Activated B cell treated with CpG ODN at 0.5 μM for 24 hours (primary cell): ENCODE measurements at regions of chr12 and their contacts with region 1.

Region 1: GRCh38 chr12:31325877-31326631 is at the start of gene SINHCAF:
- DNase-seq: peak; percentile 99
- ATAC-seq: peak; percentile 62
- H3K4me3 Mint-ChIP-seq: peak within 1 kb of the TSS; percentile 96
- H3K27ac Mint-ChIP-seq: peak within 1 kb of the TSS; percentile 97
- H3K4me1 Mint-ChIP-seq: peaks cover 34% of the 10 kb centered on the region
- H3K27me3 Mint-ChIP-seq: no peaks in the 10 kb centered on the region
- CTCF ChIP-seq: no peak
- total RNA-seq, gene SINHCAF: 153 and 157 TPM in 2 replicates

Region 2: DNA sequence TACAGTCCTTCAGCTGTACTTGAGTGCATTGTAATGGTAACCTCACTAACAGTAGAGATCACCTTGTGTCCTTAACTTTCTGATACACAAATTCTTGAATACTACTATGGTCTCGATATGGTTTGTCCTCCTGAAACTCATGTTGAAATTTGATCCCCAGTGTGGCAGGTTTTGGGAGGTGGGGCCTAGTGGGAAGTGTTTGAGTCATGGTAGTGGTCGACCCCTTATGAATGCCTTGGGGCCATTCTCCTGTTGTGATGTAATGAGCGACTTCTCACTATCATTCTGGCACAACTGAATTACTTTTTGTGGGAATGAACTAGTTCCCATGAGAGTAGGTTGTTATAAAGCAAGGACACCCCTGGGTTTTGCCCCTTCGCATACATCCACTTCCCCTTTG is 682.7 kb before region 1 on chr12:
- CTCF ChIA-PET with region 1: no interaction called
- POLR2A ChIA-PET with region 1: no interaction called
- intact Hi-C with region 1: no loop called
- DNase-seq: no peak
- ATAC-seq: no peak
- H3K4me3 Mint-ChIP-seq: no peak overlapping the region
- H3K27ac Mint-ChIP-seq: no peak overlapping the region
- H3K4me1 Mint-ChIP-seq: no peaks in the 10 kb centered on the region
- H3K27me3 Mint-ChIP-seq: no peaks in the 10 kb centered on the region
- CTCF ChIP-seq: no peak

Region 3: GRCh38 chr12:30754709-30755394 is 571.2 kb before region 1 on chr12 and contains the start of gene CAPRIN2:
- CTCF ChIA-PET with region 1: no interaction called
- POLR2A ChIA-PET with region 1: no interaction called
- intact Hi-C with region 1: loop called (anchors 2 kb)
- DNase-seq: peak; percentile 97
- ATAC-seq: peak; percentile 88
- H3K4me3 Mint-ChIP-seq: peak within 1 kb of the TSS; percentile 95
- H3K27ac Mint-ChIP-seq: peak within 1 kb of the TSS; percentile 90
- H3K4me1 Mint-ChIP-seq: peaks cover 20% of the 10 kb centered on the region
- H3K27me3 Mint-ChIP-seq: no peaks in the 10 kb centered on the region
- CTCF ChIP-seq: no peak
- total RNA-seq, gene CAPRIN2: 17.5 and 18.7 TPM in 2 replicates

Region 4: GRCh38 chr12:31362759-31363415 is 36.8 kb after region 1 on chr12:
- CTCF ChIA-PET with region 1: no interaction called
- POLR2A ChIA-PET with region 1: interaction called, 5 read pairs
- intact Hi-C with region 1: loop called (anchors 2 kb)
- DNase-seq: no peak
- ATAC-seq: peak; percentile 81
- H3K4me3 Mint-ChIP-seq: peak overlapping the region; percentile 58
- H3K27ac Mint-ChIP-seq: peak overlapping the region; percentile 47
- H3K4me1 Mint-ChIP-seq: peaks cover 19% of the 10 kb centered on the region
- H3K27me3 Mint-ChIP-seq: no peaks in the 10 kb centered on the region
- CTCF ChIP-seq: no peak

Region 5: GRCh38 chr12:31589904-31590641 is 264.0 kb after region 1 on chr12:
- CTCF ChIA-PET with region 1: no interaction called
- POLR2A ChIA-PET with region 1: interaction called, 12 read pairs
- intact Hi-C with region 1: loop called (anchors 1 kb)
- DNase-seq: peak; percentile 75
- ATAC-seq: peak; percentile 70
- H3K4me3 Mint-ChIP-seq: peak overlapping the region; percentile 96
- H3K27ac Mint-ChIP-seq: peak overlapping the region; percentile 94
- H3K4me1 Mint-ChIP-seq: peaks cover 60% of the 10 kb centered on the region
- H3K27me3 Mint-ChIP-seq: no peaks in the 10 kb centered on the region
- CTCF ChIP-seq: no peak

Region 6: GRCh38 chr12:32273712-32274111 is 947.7 kb after region 1 on chr12:
- CTCF ChIA-PET with region 1: no interaction called
- POLR2A ChIA-PET with region 1: interaction called, 4 read pairs
- intact Hi-C with region 1: loop called (anchors 2 kb)
- DNase-seq: peak; percentile 47
- ATAC-seq: peak; percentile 96
- H3K4me3 Mint-ChIP-seq: peak overlapping the region; percentile 77
- H3K27ac Mint-ChIP-seq: peak overlapping the region; percentile 99
- H3K4me1 Mint-ChIP-seq: peaks cover 39% of the 10 kb centered on the region
- H3K27me3 Mint-ChIP-seq: no peaks in the 10 kb centered on the region
- CTCF ChIP-seq: no peak

Region 7: DNA sequence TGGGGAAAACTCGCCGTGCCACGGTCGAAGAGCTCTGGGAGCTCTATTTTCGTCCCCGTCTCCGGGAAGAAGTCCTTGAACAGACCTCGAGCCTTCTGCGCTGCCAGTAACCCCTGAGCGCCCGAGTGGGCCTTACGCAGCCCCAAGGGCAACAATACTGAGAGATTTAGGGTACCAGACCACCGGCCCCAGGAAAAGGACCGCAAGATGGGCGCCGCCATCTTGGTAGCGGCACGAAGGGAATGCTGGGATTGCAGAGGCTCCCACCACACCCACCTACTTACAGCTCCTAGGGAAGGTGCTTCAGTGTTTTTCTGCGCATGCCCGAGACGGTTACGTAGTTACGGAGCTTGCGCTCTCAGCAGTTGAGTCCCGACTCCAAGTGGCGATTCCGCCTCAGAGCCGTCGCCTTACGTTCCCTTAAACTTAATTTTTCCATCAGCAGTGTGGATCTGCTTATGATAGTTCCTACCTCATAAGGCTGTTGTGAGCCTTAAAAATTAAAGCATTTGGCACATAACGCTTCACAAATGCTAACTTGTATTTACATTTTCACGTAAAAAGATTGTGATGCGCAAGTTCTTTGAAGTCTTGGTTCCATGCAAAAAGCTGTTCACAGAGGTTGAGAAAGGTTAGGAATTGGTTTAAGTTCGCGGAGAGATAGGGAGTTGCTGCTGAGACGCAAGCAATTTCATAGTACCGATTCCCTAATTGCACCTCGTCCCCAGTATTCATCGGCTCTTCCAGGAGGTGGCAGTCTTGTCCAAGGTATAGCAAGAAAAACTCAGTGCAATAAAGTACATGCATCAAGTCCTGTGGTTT is 1429.8 kb after region 1 on chr12 and contains the start of gene YARS2:
- CTCF ChIA-PET with region 1: no interaction called
- POLR2A ChIA-PET with region 1: interaction called, 6 read pairs
- intact Hi-C with region 1: loop called (anchors 1 kb)
- DNase-seq: peak; percentile 75
- ATAC-seq: peak; percentile 87
- H3K4me3 Mint-ChIP-seq: peak within 1 kb of the TSS; percentile 95
- H3K27ac Mint-ChIP-seq: peak within 1 kb of the TSS; percentile 92
- H3K4me1 Mint-ChIP-seq: peaks cover 17% of the 10 kb centered on the region
- H3K27me3 Mint-ChIP-seq: no peaks in the 10 kb centered on the region
- CTCF ChIP-seq: no peak
- total RNA-seq, gene YARS2: 19.6 and 23.2 TPM in 2 replicates